Activated CD4-positive, alpha-beta T cell treated with anti-CD3 and anti-CD28 coated beads for 36 hours (primary cell): ENCODE measurements at regions of chr9 and their contacts with region 1.

Region 1: GRCh38 chr9:137445275-137445807 is 4.2 kb upstream of the ENTPD8 start:
- DNase-seq: peak; percentile 91
- ATAC-seq: peak; percentile 91
- H3K4me3 Mint-ChIP-seq: no peak overlapping the region
- H3K27ac Mint-ChIP-seq: no peak overlapping the region
- H3K4me1 Mint-ChIP-seq: peaks cover 16% of the 10 kb centered on the region
- H3K27me3 Mint-ChIP-seq: peaks cover 10% of the 10 kb centered on the region

Region 2: DNA sequence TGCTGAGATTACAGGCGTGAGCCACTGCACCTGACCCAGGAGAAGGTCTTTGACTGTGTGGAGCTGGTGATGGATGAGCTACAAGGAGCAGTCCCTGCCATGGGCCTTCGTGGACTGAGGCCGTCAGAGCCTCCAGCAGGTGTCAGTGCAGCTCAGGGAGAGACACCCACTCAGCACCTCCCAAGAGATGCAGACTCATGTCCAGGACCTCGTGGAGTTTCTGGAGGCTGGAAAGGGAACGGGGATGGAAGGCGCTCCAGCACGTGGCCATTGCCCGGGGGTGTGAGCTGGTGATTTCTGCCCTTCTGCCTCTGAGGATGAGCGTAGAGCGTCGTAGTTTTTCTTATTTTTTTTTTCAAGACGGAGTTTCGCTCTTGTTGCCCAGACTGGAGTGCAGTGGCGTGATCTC is 158.4 kb before region 1 on chr9:
- CTCF ChIA-PET with region 1: interaction called, 3 read pairs
- POLR2A ChIA-PET with region 1: no interaction called
- intact Hi-C with region 1: loop called (anchors 2 to 10 kb)
- DNase-seq: peak; percentile 64
- ATAC-seq: peak; percentile 78
- H3K4me3 Mint-ChIP-seq: no peak overlapping the region
- H3K27ac Mint-ChIP-seq: no peak overlapping the region
- H3K4me1 Mint-ChIP-seq: no peaks in the 10 kb centered on the region
- H3K27me3 Mint-ChIP-seq: peaks cover 9% of the 10 kb centered on the region